Spleen (tissue), 13 donors: ENCODE measurements at regions of chr19 and their contacts with region 1.

Region 1: DNA sequence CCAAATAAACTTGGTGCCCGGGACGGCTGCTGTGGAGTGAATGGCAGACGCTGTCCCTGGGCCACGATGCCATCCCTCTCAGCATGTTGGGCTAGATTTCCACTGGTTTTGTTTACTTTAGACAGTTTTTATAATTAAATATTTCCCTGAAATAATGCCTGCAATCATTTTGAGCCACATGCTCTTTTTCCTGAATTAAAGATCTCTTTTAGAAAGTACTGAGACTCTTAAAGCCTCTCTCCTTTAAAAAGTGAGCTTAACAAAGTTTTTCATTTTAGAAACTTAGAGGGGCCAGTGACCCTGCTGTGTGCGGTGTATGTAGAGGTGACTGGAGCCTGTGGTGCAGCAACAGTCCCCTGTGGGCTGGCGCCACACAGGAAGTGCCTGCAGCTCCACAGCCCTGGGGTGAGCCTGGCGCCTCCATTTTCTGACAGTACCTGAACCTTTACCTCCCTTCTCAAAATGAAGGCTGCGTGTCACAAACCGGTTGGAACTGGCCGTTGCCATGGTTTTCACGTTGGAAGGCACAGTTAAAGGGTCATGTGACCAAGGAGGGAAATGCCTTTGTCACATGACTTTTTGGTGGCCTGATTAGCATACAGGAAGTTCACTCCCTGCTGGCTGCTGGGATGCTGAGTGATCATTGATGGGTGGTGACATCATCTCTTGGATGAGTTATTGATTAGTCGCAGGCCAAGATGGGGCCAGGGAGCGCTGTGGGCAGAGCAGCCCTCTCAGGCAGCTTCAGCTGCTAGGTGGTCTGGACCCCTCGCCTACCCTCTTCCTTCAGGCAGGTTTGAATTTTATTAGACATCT is 26.3 kb downstream of the TSSK6 start:
- DNase-seq: peak; percentile 94
- H3K4me3 ChIP-seq: peak overlapping the region in 3 of 8 donors; percentile 15 to 50 (median 20)
- H3K27ac ChIP-seq: peak overlapping the region; percentile 76 to 88 (median 84)
- H3K4me1 ChIP-seq: peaks cover 56 to 90% (median 69%) of the 10 kb centered on the region in 6 donors
- H3K27me3 ChIP-seq: no peaks in the 10 kb centered on the region
- CTCF ChIP-seq: peak in 3 of 11 experiments; percentile 10 to 21 (median 11)
- POLR2A ChIP-seq: no peak

Region 2: DNA sequence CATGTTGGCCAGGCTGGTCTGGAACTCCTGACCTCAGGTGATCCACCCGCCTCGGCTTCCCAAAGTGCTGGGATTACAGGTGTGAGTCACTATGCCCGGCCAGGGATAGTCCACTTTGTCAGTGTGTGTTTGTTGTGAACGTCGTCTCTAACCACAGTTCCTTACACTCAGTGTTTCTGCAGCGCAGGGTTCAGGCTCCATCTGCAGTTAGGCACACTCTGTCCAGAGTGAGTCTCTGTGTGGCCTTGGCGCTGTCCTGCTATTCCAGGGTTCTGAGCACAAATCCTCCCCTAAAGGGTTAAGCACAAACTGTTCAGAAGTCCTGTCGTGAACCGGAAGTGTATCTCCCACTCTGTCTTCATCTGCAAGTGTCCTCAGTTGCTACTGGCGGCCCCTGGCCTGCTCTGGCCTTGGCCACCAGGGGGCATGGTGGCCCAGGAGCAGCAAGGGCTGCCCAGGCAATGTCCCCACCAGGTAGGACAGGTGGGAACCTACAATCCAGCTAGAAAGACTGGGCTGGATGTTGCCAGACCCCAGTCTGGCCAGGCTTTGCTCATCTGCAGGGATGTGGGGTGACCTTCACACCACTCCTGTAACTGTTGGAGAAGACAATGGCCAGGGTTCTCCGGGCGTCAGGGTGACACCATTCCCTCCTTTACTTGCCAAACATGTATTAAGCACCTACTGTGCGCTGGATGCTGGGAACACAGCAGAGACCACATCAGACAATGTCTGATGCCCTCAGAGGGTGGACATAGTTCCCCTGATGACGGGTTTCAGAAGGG is 122.3 kb before region 1 on chr19:
- intact Hi-C with region 1: loop called (anchors 5 kb)
- DNase-seq: peak; percentile 93
- H3K4me3 ChIP-seq: peak overlapping the region in 1 of 8 donors; percentile 37
- H3K27ac ChIP-seq: peak overlapping the region in 7 of 8 donors; percentile 17 to 55 (median 40)
- H3K4me1 ChIP-seq: peaks cover 15 to 58% (median 29%) of the 10 kb centered on the region in 6 donors
- H3K27me3 ChIP-seq: no peaks in the 10 kb centered on the region
- CTCF ChIP-seq: peak; percentile 86 to 98 (median 96)
- POLR2A ChIP-seq: no peak

Region 3: GRCh38 chr19:19404879-19405860 is 83.9 kb before region 1 on chr19 and contains the start of gene GATAD2A:
- intact Hi-C with region 1: loop called (anchors 10 kb)
- DNase-seq: peak; percentile 98
- H3K4me3 ChIP-seq: peak within 1 kb of the TSS; percentile 83 to 98 (median 88)
- H3K27ac ChIP-seq: peak within 1 kb of the TSS; percentile 83 to 95 (median 92)
- H3K4me1 ChIP-seq: peaks cover 41 to 88% (median 65%) of the 10 kb centered on the region in 6 donors
- H3K27me3 ChIP-seq: no peaks in the 10 kb centered on the region
- CTCF ChIP-seq: peak in 10 of 11 experiments; percentile 21 to 67 (median 52)
- POLR2A ChIP-seq: no peak
- total RNA-seq, gene GATAD2A: 54.0 to 122 (median 94.2) TPM